ENCODE measurements at regions of chr2 and their contacts with region 1.

Region 1: GRCh38 chr2:193251909-193252308 is 1057.2 kb upstream of the TMEFF2 start:
- DNase-seq: no peak
- ATAC-seq: no peak
- H3K4me3 ChIP-seq: no peak overlapping the region
- H3K4me3 Mint-ChIP-seq: no peak overlapping the region
- H3K27ac ChIP-seq: no peak overlapping the region
- H3K27ac Mint-ChIP-seq: no peak overlapping the region
- H3K4me1 ChIP-seq: no peaks in the 10 kb centered on the region
- H3K4me1 Mint-ChIP-seq: no peaks in the 10 kb centered on the region
- H3K27me3 ChIP-seq: no peaks in the 10 kb centered on the region
- H3K27me3 Mint-ChIP-seq: no peaks in the 10 kb centered on the region

Region 2: GRCh38 chr2:191555092-191555742 is 1696.7 kb before region 1 on chr2:
- CTCF ChIA-PET with region 1: interaction called in 1 of 2 experiments, 10 read pairs
- POLR2A ChIA-PET with region 1: no interaction called
- DNase-seq: peak; percentile 42 to 87 (median 70)
- ATAC-seq: peak; percentile 63 to 88 (median 74)
- H3K4me3 ChIP-seq: no peak overlapping the region
- H3K4me3 Mint-ChIP-seq: no peak overlapping the region
- H3K27ac ChIP-seq: no peak overlapping the region
- H3K27ac Mint-ChIP-seq: no peak overlapping the region
- H3K4me1 ChIP-seq: no peaks in the 10 kb centered on the region
- H3K4me1 Mint-ChIP-seq: peaks cover 2 to 5% (median 3%) of the 10 kb centered on the region in 3 donors
- H3K27me3 ChIP-seq: peaks cover 0 to 7% of the 10 kb centered on the region in 2 experiments
- H3K27me3 Mint-ChIP-seq: peaks cover 13 to 16% of the 10 kb centered on the region in 2 donors